ENCODE measurements at regions of chr13 and their contacts with region 1.

Region 1: DNA sequence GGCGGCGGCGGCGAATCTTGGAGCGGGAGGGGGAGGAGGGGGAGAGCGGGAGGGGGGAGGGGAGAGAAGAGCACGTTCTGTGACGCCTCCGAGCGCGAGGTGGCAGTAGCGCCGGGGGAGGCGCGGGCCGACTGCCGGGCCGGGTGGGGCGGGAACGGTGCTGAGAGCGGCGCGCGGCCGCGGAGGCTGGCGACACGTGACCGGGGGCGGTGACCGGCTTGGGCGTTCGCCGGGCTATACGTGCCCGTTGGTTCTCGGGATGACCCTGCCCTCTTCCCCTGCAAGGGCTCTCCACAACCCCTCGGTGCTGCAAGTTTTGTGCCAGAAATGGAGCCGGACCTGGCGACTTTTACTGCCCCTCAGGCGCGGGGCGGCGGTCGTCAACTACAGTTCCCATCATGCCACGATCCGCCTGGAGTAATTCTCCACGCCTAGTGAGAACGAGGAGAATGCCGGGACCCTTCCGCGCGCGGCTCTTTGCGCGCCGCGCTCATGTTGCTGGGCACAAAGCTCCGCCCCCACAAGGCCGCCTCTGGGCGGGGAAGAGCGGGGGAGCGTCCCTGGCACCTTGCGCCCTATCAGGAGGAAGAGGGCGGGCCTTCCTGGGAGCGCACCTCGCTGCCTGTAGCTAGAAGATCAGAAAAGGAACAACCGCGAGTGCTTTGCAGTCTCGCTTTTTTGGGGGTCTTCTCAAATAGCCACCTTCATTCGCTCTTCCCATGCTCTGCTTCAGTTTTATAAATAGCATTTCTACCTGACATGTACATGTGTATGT is at the start of gene KPNA3:
- DNase-seq: peak; percentile 96 to 97
- H3K4me3 ChIP-seq: peak within 1 kb of the TSS; percentile 92
- H3K4me3 Mint-ChIP-seq: peak within 1 kb of the TSS; percentile 83
- H3K27ac Mint-ChIP-seq: peak within 1 kb of the TSS; percentile 88
- H3K4me1 ChIP-seq: peaks cover 31% of the 10 kb centered on the region
- H3K4me1 Mint-ChIP-seq: peaks cover 14% of the 10 kb centered on the region
- H3K27me3 ChIP-seq: no peaks in the 10 kb centered on the region
- H3K27me3 Mint-ChIP-seq: no peaks in the 10 kb centered on the region
- CTCF ChIP-seq: peak; percentile 11 to 37
- total RNA-seq, gene KPNA3: 81.3 and 81.9 TPM in 2 replicates

Region 2: DNA sequence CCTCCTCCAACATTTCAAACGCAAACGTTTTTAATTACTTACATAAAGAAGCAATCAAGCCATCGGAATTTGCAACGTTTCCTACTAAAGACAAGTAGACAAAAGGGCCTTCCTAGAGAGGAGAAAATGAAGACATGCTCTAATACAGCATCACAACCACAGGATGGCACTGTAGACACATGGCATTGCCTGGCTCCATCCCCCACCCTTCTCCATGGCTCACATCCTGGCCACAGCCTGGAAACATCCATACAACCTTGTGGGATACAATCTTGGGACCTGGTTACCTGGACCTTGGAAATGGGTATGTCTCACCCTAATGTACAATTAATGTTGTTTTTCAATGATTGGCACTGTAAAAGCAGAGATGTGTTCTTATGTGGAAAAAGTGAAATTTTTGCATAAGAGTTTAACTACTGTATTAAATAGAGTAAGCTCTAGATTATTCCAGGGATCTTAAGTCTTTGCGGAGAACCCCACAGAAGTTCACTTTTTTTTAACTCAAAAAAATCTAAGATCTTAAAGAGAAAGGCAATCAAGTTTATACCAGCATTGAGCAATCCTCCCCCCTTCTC is 122.9 kb before region 1 on chr13:
- CTCF ChIA-PET with region 1: interaction called, 4 read pairs
- POLR2A ChIA-PET with region 1: interaction called, 9 read pairs
- intact Hi-C with region 1: loop called (anchors 1 kb)
- DNase-seq: peak; percentile 54 to 72
- H3K4me3 ChIP-seq: no peak overlapping the region
- H3K4me3 Mint-ChIP-seq: no peak overlapping the region
- H3K27ac Mint-ChIP-seq: no peak overlapping the region
- H3K4me1 ChIP-seq: no peaks in the 10 kb centered on the region
- H3K4me1 Mint-ChIP-seq: no peaks in the 10 kb centered on the region
- H3K27me3 ChIP-seq: no peaks in the 10 kb centered on the region
- H3K27me3 Mint-ChIP-seq: no peaks in the 10 kb centered on the region
- CTCF ChIP-seq: peak; percentile 63 to 75

Region 3: GRCh38 chr13:49739498-49740187 is 53.1 kb before region 1 on chr13:
- CTCF ChIA-PET with region 1: interaction called, 5 read pairs
- POLR2A ChIA-PET with region 1: interaction called, 20 read pairs
- intact Hi-C with region 1: loop called (anchors 2 kb)
- DNase-seq: peak in 1 of 2 experiments; percentile 53
- H3K4me3 ChIP-seq: no peak overlapping the region
- H3K4me3 Mint-ChIP-seq: no peak overlapping the region
- H3K27ac Mint-ChIP-seq: no peak overlapping the region
- H3K4me1 ChIP-seq: peaks cover 32% of the 10 kb centered on the region
- H3K4me1 Mint-ChIP-seq: peaks cover 31% of the 10 kb centered on the region
- H3K27me3 ChIP-seq: no peaks in the 10 kb centered on the region
- H3K27me3 Mint-ChIP-seq: no peaks in the 10 kb centered on the region
- CTCF ChIP-seq: no peak

Region 4: GRCh38 chr13:49821216-49822030 is 28.7 kb after region 1 on chr13:
- CTCF ChIA-PET with region 1: interaction called, 12 read pairs
- POLR2A ChIA-PET with region 1: interaction called, 19 read pairs
- intact Hi-C with region 1: no loop called
- DNase-seq: no peak
- H3K4me3 ChIP-seq: no peak overlapping the region
- H3K4me3 Mint-ChIP-seq: no peak overlapping the region
- H3K27ac Mint-ChIP-seq: peak overlapping the region; percentile 29
- H3K4me1 ChIP-seq: peaks cover 32% of the 10 kb centered on the region
- H3K4me1 Mint-ChIP-seq: peaks cover 29% of the 10 kb centered on the region
- H3K27me3 ChIP-seq: no peaks in the 10 kb centered on the region
- H3K27me3 Mint-ChIP-seq: no peaks in the 10 kb centered on the region
- CTCF ChIP-seq: no peak

Region 5: GRCh38 chr13:49936085-49936940 is 143.6 kb after region 1 on chr13 and contains the start of gene SPRYD7:
- CTCF ChIA-PET with region 1: interaction called, 26 read pairs
- POLR2A ChIA-PET with region 1: interaction called, 11 read pairs
- intact Hi-C with region 1: loop called (anchors 2 kb)
- DNase-seq: peak; percentile 99 to 100
- H3K4me3 ChIP-seq: peak within 1 kb of the TSS; percentile 97
- H3K4me3 Mint-ChIP-seq: peak within 1 kb of the TSS; percentile 100
- H3K27ac Mint-ChIP-seq: peak within 1 kb of the TSS; percentile 98
- H3K4me1 ChIP-seq: peaks cover 43% of the 10 kb centered on the region
- H3K4me1 Mint-ChIP-seq: peaks cover 32% of the 10 kb centered on the region
- H3K27me3 ChIP-seq: no peaks in the 10 kb centered on the region
- H3K27me3 Mint-ChIP-seq: no peaks in the 10 kb centered on the region
- CTCF ChIP-seq: peak; percentile 97 to 99
- total RNA-seq, gene SPRYD7: 16.7 and 20.7 TPM in 2 replicates

Region 6: GRCh38 chr13:50033725-50034124 is 241.0 kb after region 1 on chr13:
- CTCF ChIA-PET with region 1: no interaction called
- POLR2A ChIA-PET with region 1: interaction called, 17 read pairs
- intact Hi-C with region 1: no loop called
- DNase-seq: no peak
- H3K4me3 ChIP-seq: no peak overlapping the region
- H3K4me3 Mint-ChIP-seq: no peak overlapping the region
- H3K27ac Mint-ChIP-seq: no peak overlapping the region
- H3K4me1 ChIP-seq: peaks cover 6% of the 10 kb centered on the region; the same call in 1 of the 2 replicates
- H3K4me1 Mint-ChIP-seq: no peaks in the 10 kb centered on the region
- H3K27me3 ChIP-seq: no peaks in the 10 kb centered on the region
- H3K27me3 Mint-ChIP-seq: no peaks in the 10 kb centered on the region
- CTCF ChIP-seq: no peak

Measured in Caco-2 (cell line).